ENCODE measurements at regions of chr12 and their contacts with region 1.

Region 1: DNA sequence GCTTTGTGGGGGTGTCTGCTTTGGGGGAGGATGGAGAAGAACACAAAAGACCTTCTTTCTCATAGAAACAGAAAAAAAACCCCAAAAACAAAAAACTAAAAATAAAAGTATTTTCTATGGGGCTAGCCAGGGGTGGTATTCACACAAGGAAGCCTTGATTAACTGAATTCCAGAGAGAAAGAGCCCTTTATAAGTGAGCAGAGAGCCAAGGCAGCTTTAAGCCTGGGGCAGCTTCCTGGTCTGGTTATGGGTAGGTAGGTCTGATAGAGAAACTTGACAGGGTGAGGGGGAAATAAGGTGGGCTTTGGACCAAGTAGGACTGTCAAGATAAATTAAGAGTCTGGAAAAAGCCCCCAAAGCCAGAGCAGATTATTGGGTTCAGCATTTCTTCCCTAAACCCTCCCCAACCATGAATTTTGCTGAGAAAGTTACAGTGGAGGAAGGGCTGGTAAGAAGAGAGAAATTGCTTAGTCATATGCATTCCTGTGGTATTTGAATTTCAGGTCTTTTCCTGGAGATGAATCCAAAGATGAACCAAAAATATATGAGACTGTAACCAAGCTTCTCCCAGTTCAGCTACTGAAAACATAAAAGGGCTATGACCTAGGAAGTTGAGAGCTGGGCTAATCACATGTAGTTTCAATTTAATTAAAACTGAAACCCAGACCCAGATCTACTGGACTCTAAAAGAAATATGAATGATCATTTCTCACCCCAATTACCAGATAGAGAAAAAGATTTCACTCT is 144.7 kb downstream of the TBC1D30 start:
- DNase-seq: no peak
- ATAC-seq: no peak
- H3K4me3 ChIP-seq: no peak overlapping the region
- H3K4me3 Mint-ChIP-seq: no peak overlapping the region
- H3K27ac ChIP-seq: no peak overlapping the region
- H3K27ac Mint-ChIP-seq: no peak overlapping the region
- H3K4me1 ChIP-seq: no peaks in the 10 kb centered on the region
- H3K4me1 Mint-ChIP-seq: no peaks in the 10 kb centered on the region
- H3K27me3 ChIP-seq: peaks cover 0 to 15% (median 1%) of the 10 kb centered on the region in 4 experiments
- H3K27me3 Mint-ChIP-seq: peaks cover 30% of the 10 kb centered on the region
- CTCF ChIP-seq: no peak

Region 2: DNA sequence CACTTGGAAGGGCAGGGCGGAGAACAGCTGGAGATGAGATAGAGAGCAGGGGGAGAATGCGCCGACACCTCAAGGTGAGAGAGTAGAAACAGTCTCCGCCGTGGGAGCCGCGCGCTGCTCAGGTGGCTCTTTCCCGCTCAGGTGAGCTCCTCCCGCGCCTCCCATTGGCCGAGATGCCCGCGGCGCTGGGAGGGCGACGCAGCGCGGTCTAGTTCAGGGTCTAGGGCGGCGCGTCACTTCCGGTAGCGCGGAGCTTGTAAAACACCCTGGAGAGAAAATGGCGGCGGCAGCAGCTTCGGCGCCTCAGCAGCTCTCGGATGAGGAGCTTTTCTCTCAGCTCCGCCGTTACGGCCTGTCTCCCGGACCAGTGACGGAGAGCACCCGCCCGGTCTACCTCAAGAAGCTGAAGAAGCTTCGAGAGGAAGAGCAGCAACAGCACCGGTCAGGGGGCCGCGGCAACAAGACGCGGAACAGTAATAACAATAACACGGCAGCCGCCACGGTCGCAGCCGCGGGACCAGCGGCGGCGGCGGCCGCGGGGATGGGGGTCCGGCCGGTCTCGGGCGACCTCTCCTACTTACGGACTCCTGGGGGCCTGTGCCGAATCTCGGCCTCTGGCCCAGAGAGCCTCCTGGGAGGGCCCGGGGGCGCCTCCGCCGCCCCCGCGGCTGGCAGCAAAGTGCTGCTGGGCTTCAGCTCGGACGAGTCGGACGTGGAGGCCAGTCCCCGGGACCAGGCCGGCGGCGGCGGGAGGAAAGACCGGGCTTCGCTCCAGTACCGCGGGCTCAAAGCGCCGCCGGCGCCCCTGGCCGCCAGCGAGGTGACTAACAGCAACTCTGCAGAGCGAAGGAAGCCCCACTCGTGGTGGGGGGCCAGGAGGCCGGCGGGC is 200.4 kb after region 1 on chr12 and contains the start of gene LEMD3:
- CTCF ChIA-PET with region 1: no interaction called
- POLR2A ChIA-PET with region 1: no interaction called
- intact Hi-C with region 1: no loop called
- DNase-seq: peak; percentile 97
- ATAC-seq: peak; percentile 95
- H3K4me3 ChIP-seq: peak within 1 kb of the TSS; percentile 76 to 98 (median 94)
- H3K4me3 Mint-ChIP-seq: peak within 1 kb of the TSS; percentile 95
- H3K27ac ChIP-seq: peak within 1 kb of the TSS; percentile 82 to 98
- H3K27ac Mint-ChIP-seq: peak within 1 kb of the TSS; percentile 99
- H3K4me1 ChIP-seq: peaks cover 35 to 37% of the 10 kb centered on the region in 2 donors
- H3K4me1 Mint-ChIP-seq: peaks cover 38% of the 10 kb centered on the region
- H3K27me3 ChIP-seq: no peaks in the 10 kb centered on the region
- H3K27me3 Mint-ChIP-seq: no peaks in the 10 kb centered on the region
- CTCF ChIP-seq: peak; percentile 15
- total RNA-seq, gene LEMD3: 65.7 and 71.8 TPM in 2 replicates

Region 3: GRCh38 chr12:65220761-65221160 is 251.6 kb after region 1 on chr12:
- CTCF ChIA-PET with region 1: no interaction called
- POLR2A ChIA-PET with region 1: interaction called, 11 read pairs
- intact Hi-C with region 1: no loop called
- DNase-seq: no peak
- ATAC-seq: no peak
- H3K4me3 ChIP-seq: no peak overlapping the region
- H3K4me3 Mint-ChIP-seq: no peak overlapping the region
- H3K27ac ChIP-seq: no peak overlapping the region
- H3K27ac Mint-ChIP-seq: no peak overlapping the region
- H3K4me1 ChIP-seq: no peaks in the 10 kb centered on the region
- H3K4me1 Mint-ChIP-seq: peaks cover under 1% of the 10 kb centered on the region
- H3K27me3 ChIP-seq: no peaks in the 10 kb centered on the region
- H3K27me3 Mint-ChIP-seq: no peaks in the 10 kb centered on the region
- CTCF ChIP-seq: no peak